ENCODE measurements at regions of chr1 and their contacts with region 1.

Region 1: GRCh38 chr1:11645670-11646265 is 8.5 kb downstream of the FBXO2 start:
- DNase-seq: peak; percentile 51 to 59
- H3K4me3 ChIP-seq: no peak overlapping the region
- H3K27ac ChIP-seq: no peak overlapping the region
- H3K4me1 ChIP-seq: peaks cover 0 to 3% of the 10 kb centered on the region in 2 donors
- H3K27me3 ChIP-seq: peaks cover 9 to 17% of the 10 kb centered on the region in 2 donors
- CTCF ChIP-seq: peak; percentile 35 to 55 (median 52)
- POLR2A ChIP-seq: no peak

Region 2: GRCh38 chr1:11044849-11045427 is 600.8 kb before region 1 on chr1:
- intact Hi-C with region 1: loop called (anchors 5 kb)
- DNase-seq: peak in 1 of 2 donors; percentile 10
- H3K4me3 ChIP-seq: no peak overlapping the region
- H3K27ac ChIP-seq: no peak overlapping the region
- H3K4me1 ChIP-seq: no peaks in the 10 kb centered on the region
- H3K27me3 ChIP-seq: no peaks in the 10 kb centered on the region
- CTCF ChIP-seq: no peak
- POLR2A ChIP-seq: no peak

Region 3: DNA sequence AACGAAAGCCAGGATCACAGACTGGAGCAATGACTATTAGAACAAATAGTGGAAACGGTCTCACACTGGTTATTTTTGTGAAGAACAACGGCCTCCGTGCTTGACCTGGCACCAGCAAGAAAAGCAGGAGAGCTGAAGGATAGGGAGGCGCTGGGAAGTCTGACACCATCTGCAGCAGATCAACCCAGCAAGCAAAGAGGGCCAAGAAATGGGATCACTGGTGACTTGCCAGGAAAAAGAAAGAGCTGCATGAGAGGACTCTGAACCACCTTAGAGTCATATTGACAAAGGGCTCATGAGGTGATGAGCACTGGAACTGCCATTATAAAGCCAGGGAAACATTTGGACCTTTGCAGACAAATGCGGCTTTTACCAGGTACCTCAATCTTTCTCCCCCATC is 408.4 kb before region 1 on chr1:
- intact Hi-C with region 1: loop called (anchors 10 kb)
- DNase-seq: no peak
- H3K4me3 ChIP-seq: no peak overlapping the region
- H3K27ac ChIP-seq: peak overlapping the region in 1 of 2 donors; percentile 35
- H3K4me1 ChIP-seq: no peaks in the 10 kb centered on the region
- H3K27me3 ChIP-seq: no peaks in the 10 kb centered on the region
- CTCF ChIP-seq: no peak
- POLR2A ChIP-seq: no peak